ENCODE measurements at regions of chr14 and their contacts with region 1.

Region 1: DNA sequence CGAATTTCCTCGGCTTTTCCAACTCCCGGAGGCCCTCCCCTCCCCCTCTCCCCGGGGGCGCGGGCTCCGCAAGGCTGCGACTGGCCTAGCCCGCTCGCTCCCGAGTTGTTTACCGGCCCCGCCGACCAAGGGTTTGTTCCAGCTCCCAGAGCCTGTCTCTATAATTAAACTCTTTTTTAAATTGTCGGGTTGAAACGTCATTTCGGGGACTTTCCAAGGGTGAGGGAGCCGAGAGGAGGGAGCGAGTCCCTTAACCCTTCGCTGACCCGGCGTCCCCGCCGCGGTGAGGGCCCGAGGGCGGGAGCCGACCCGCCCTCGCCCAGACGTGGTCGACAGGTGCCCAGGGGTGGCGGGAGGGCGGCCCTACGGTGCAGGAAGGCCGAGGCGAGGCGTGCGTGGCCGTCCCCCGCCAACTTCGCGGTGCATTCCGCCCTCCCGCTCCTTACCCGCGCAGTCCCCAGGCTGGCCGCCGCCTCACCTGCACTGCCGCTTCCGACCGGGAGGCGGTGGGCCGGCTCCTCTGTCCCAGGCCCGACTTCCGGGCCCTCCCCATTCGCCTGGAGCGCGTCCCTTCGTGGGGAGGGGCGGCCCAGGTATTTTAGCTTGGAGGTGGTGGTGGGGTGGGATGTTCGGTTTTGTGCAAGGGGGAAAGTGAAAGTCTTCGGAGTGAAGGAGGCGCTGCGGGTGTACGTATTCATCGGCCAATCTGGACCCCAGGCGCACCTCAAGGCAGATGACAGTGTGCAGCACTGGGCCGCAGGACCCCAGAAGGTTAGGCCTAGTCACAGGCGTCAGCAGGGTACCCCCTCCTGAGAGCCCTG is 2.9 kb upstream of the ZFP36L1 start:
- DNase-seq: peak; percentile 96
- ATAC-seq: peak; percentile 39
- H3K4me3 ChIP-seq: peak overlapping the region; percentile 59 to 100 (median 94)
- H3K4me3 Mint-ChIP-seq: peak overlapping the region; percentile 97
- H3K27ac ChIP-seq: peak overlapping the region; percentile 100
- H3K27ac Mint-ChIP-seq: peak overlapping the region; percentile 100
- H3K4me1 ChIP-seq: peaks cover 30 to 38% of the 10 kb centered on the region in 2 donors
- H3K4me1 Mint-ChIP-seq: peaks cover 36% of the 10 kb centered on the region
- H3K27me3 ChIP-seq: no peaks in the 10 kb centered on the region
- H3K27me3 Mint-ChIP-seq: no peaks in the 10 kb centered on the region
- CTCF ChIP-seq: peak; percentile 62

Region 2: DNA sequence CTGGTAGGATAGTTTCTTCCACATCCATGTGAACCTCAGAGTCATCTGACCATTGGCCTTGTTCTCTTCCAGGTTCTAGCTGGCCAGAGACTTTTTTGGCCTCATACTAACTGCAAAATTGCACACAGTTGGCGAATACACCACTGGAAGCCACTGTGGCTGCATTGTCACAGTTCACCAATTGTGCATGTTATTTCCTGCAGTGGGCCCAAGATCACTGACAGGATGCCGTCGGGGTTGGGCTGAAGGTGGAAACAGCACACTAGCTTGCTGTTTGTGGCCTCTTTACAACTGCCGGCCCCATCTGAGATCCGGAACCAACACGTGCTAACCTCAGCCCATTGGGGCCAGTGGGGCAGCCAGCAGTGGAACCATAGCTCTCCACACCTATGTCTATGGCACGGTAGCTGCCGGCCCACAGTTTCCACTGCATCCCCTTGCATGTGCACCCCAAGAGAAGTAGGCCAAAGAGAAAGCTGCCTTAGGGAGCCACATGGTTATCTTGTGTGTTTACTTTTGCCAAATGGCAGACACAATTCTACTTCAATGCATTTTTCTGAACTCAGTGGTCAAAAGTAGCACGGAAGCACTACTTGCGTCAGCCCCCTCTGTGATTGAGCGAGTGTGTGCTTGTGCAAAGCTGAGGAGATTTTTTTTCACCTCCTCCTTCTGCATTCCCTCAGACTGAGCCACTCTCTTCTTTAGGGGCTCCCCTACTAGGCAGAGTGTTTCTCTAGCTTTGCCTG is 512.3 kb before region 1 on chr14:
- CTCF ChIA-PET with region 1: interaction called, 24 read pairs
- POLR2A ChIA-PET with region 1: interaction called, 66 read pairs
- intact Hi-C with region 1: loop called (anchors 1 kb)
- DNase-seq: peak; percentile 87
- ATAC-seq: peak; percentile 69
- H3K4me3 ChIP-seq: peak overlapping the region in 3 of 5 experiments; percentile 5 to 31 (median 7)
- H3K4me3 Mint-ChIP-seq: peak overlapping the region; percentile 83
- H3K27ac ChIP-seq: peak overlapping the region; percentile 91 to 98
- H3K27ac Mint-ChIP-seq: peak overlapping the region; percentile 98
- H3K4me1 ChIP-seq: peaks cover 93 to 96% of the 10 kb centered on the region in 2 donors
- H3K4me1 Mint-ChIP-seq: peaks cover 95% of the 10 kb centered on the region
- H3K27me3 ChIP-seq: no peaks in the 10 kb centered on the region
- H3K27me3 Mint-ChIP-seq: no peaks in the 10 kb centered on the region
- CTCF ChIP-seq: no peak

Region 3: DNA sequence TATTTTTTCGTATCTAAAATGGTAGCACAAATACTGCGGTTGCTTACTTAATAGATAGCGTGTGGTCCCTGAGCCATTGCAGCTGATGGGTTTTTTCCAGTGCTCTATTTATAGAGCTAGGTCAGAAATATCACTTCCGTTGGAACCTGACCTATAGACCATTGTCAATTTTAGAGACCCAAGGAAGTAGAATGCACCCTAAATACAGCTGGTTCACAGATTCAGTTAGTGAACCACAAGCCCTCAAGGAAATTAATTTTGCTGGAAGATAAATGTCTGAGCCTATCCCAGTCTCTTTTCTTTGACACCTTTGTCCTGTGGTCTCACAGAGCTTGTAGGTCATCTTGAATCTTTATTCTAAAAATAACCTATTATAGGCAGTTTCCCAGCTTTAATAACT is 394.0 kb before region 1 on chr14:
- CTCF ChIA-PET with region 1: no interaction called
- POLR2A ChIA-PET with region 1: interaction called, 4 read pairs
- intact Hi-C with region 1: loop called (anchors 2 kb)
- DNase-seq: peak; percentile 71
- ATAC-seq: peak; percentile 59
- H3K4me3 ChIP-seq: peak overlapping the region in 1 of 5 experiments; percentile 57
- H3K4me3 Mint-ChIP-seq: peak overlapping the region; percentile 82
- H3K27ac ChIP-seq: peak overlapping the region; percentile 91 to 96
- H3K27ac Mint-ChIP-seq: peak overlapping the region; percentile 97
- H3K4me1 ChIP-seq: peaks cover 91 to 94% of the 10 kb centered on the region in 2 donors
- H3K4me1 Mint-ChIP-seq: peaks cover 90% of the 10 kb centered on the region
- H3K27me3 ChIP-seq: no peaks in the 10 kb centered on the region
- H3K27me3 Mint-ChIP-seq: no peaks in the 10 kb centered on the region
- CTCF ChIP-seq: no peak

Region 4: DNA sequence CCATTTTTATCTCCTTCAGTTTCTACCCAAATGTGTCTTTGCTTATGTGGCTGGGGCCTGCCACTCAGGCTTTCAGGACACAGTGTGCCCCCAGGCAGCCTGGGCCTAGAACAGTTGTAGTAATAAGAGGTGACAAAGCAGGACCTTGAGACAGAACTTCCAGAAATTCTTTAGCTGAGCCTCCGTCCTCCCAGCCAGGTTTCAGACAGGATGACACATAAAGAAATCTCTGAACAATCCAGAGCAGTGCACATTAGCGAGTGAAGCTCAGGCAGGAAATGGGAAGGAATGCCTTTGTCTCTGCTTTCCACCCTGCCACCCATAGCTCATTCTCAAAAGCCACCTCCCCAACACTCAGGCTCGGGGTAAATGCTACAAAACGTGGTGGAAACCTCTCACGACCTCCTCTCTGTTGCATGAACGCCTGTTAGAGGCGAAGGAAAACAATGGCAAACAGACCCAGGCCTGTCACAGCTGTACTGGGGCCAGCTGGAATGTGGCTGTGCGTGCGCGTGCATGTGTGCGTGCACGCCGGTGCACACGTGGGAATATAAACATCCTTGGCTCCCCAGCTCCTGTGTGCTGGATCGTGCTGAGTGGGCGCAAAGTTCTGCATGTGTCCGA is 289.7 kb before region 1 on chr14:
- CTCF ChIA-PET with region 1: no interaction called
- POLR2A ChIA-PET with region 1: interaction called, 17 read pairs
- intact Hi-C with region 1: no loop called
- DNase-seq: no peak
- ATAC-seq: no peak
- H3K4me3 ChIP-seq: no peak overlapping the region
- H3K4me3 Mint-ChIP-seq: peak overlapping the region; percentile 40
- H3K27ac ChIP-seq: peak overlapping the region; percentile 79 to 88
- H3K27ac Mint-ChIP-seq: peak overlapping the region; percentile 89
- H3K4me1 ChIP-seq: peaks cover 73 to 86% of the 10 kb centered on the region in 2 donors
- H3K4me1 Mint-ChIP-seq: peaks cover 83% of the 10 kb centered on the region
- H3K27me3 ChIP-seq: no peaks in the 10 kb centered on the region
- H3K27me3 Mint-ChIP-seq: no peaks in the 10 kb centered on the region
- CTCF ChIP-seq: no peak

Region 5: DNA sequence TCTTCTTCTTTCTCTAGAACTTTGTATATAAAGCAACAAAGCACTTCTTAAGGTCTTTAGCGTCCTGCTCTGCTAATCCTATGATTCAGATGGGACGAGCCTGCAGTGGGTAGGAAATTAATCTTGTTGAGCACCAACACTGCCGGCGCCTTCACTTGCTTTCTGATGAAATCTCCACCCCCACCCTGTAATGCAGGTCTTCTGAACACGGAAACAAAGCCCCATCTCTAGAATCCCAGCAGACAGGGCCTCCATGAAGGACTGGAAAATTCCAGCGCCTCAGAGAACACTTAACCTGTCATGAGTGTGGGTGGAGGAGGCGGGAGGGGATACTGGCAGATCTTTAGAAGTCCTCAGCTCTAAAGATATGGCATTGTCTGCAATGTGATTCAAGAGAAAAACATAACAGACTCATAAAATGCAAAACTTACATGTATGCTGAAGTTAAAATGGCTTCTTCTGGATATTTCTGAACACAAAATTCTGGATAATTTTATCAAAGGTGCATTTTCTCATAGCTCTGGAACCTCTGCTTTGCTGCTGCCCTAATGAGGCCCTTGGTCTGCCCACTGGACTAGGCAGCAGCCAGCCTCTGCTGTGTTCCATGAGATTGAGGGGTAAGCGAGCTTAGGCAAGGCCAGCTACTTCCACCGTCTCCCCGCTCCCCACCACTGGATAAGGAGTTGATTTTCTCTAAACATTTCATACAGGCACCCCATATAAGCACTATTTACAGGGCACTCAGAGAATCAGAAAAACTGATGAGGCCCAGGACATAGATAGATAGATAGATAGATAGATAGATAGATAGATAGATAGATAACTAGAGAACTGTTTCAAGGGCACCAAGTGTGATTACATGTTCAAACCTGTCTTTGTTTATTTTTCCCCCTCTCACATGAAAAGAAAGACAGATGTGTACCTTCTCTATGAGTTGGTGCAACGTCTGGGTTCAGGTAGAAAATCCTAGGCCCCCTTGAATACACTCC is 46.0 kb before region 1 on chr14:
- CTCF ChIA-PET with region 1: no interaction called
- POLR2A ChIA-PET with region 1: no interaction called
- intact Hi-C with region 1: no loop called
- DNase-seq: no peak
- ATAC-seq: no peak
- H3K4me3 ChIP-seq: no peak overlapping the region
- H3K4me3 Mint-ChIP-seq: no peak overlapping the region
- H3K27ac ChIP-seq: no peak overlapping the region
- H3K27ac Mint-ChIP-seq: no peak overlapping the region
- H3K4me1 ChIP-seq: no peaks in the 10 kb centered on the region
- H3K4me1 Mint-ChIP-seq: no peaks in the 10 kb centered on the region
- H3K27me3 ChIP-seq: no peaks in the 10 kb centered on the region
- H3K27me3 Mint-ChIP-seq: no peaks in the 10 kb centered on the region
- CTCF ChIP-seq: no peak

Region 6: GRCh38 chr14:68807148-68807600 is 11.4 kb after region 1 on chr14:
- CTCF ChIA-PET with region 1: interaction called, 263 read pairs
- POLR2A ChIA-PET with region 1: interaction called, 416 read pairs
- intact Hi-C with region 1: loop called (anchors 1 kb)
- DNase-seq: peak; percentile 81
- ATAC-seq: no peak
- H3K4me3 ChIP-seq: peak overlapping the region in 2 of 5 experiments; percentile 1 to 54
- H3K4me3 Mint-ChIP-seq: peak overlapping the region; percentile 74
- H3K27ac ChIP-seq: peak overlapping the region; percentile 95
- H3K27ac Mint-ChIP-seq: peak overlapping the region; percentile 99
- H3K4me1 ChIP-seq: peaks cover 62 to 71% of the 10 kb centered on the region in 2 donors
- H3K4me1 Mint-ChIP-seq: peaks cover 81% of the 10 kb centered on the region
- H3K27me3 ChIP-seq: no peaks in the 10 kb centered on the region
- H3K27me3 Mint-ChIP-seq: no peaks in the 10 kb centered on the region
- CTCF ChIP-seq: no peak

Region 7: GRCh38 chr14:69766984-69767368 is 971.2 kb after region 1 on chr14 and contains the start of gene SRSF5:
- CTCF ChIA-PET with region 1: no interaction called
- POLR2A ChIA-PET with region 1: no interaction called
- intact Hi-C with region 1: loop called (anchors 5 kb)
- DNase-seq: peak; percentile 98
- ATAC-seq: peak; percentile 80
- H3K4me3 ChIP-seq: peak within 1 kb of the TSS; percentile 97 to 100 (median 99)
- H3K4me3 Mint-ChIP-seq: peak within 1 kb of the TSS; percentile 98
- H3K27ac ChIP-seq: peak within 1 kb of the TSS; percentile 99 to 100
- H3K27ac Mint-ChIP-seq: peak within 1 kb of the TSS; percentile 100
- H3K4me1 ChIP-seq: peaks cover 26 to 27% of the 10 kb centered on the region in 2 donors
- H3K4me1 Mint-ChIP-seq: peaks cover 43% of the 10 kb centered on the region
- H3K27me3 ChIP-seq: no peaks in the 10 kb centered on the region
- H3K27me3 Mint-ChIP-seq: no peaks in the 10 kb centered on the region
- CTCF ChIP-seq: no peak
- total RNA-seq, gene SRSF5: 708 and 768 TPM in 2 replicates

Measured in B cell (primary cell).